ENCODE measurements at regions of chr15 and their contacts with region 1.

Region 1: DNA sequence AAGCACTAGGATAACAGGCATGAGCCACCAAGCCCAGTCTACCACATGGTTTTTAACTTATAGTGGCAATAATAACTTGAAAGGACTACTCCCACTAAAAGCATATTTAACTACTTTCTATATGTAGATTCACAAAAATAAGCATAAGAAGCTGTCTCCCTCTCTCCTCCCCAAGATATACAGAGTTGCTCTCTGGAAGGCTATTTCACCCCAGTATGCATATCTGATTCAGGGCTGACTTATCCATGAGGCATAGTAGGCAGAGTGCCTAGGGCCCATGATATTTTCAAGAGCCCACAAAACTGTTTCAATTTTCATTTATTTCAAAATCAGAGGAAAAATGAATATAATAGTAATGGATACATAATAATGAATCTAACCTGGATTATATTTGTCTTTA is 20.5 kb downstream of the ATP8B4 start:
- DNase-seq: no peak
- ATAC-seq: no peak
- H3K4me3 ChIP-seq: no peak overlapping the region
- H3K27ac ChIP-seq: no peak overlapping the region
- H3K4me1 ChIP-seq: peaks cover 0 to 12% (median 0%) of the 10 kb centered on the region in 12 donors
- H3K27me3 ChIP-seq: no peaks in the 10 kb centered on the region
- CTCF ChIP-seq: no peak
- POLR2A ChIP-seq: no peak

Region 2: DNA sequence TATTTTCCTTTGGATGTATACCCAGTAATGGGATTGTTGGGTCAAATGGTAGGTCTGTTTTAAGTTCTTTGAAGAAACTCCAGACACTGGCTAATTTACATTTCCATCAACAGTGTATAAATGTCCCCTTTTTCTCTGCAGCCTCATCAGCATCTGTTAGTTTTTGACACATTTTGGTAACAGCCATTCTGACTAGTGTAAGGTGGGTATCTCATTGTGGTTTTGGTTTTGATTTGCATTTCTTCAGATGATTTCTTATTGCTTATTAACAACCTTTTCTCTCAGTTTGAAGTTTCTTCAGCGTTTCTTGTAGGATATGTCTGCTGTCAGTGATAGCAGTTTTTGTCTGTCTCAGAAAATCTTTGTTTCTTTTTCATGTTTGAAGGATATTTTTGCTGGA is 913.1 kb before region 1 on chr15:
- intact Hi-C with region 1: no loop called
- DNase-seq: no peak
- ATAC-seq: no peak
- H3K4me3 ChIP-seq: no peak overlapping the region
- H3K27ac ChIP-seq: no peak overlapping the region
- H3K4me1 ChIP-seq: peaks cover 0 to 9% (median 0%) of the 10 kb centered on the region in 12 donors
- H3K27me3 ChIP-seq: no peaks in the 10 kb centered on the region
- CTCF ChIP-seq: no peak
- POLR2A ChIP-seq: no peak

Region 3: GRCh38 chr15:50066192-50066591 is 32.4 kb before region 1 on chr15:
- intact Hi-C with region 1: loop called in 1 of 10 experiments (anchors 2 kb)
- DNase-seq: no peak
- ATAC-seq: no peak
- H3K4me3 ChIP-seq: no peak overlapping the region
- H3K27ac ChIP-seq: no peak overlapping the region
- H3K4me1 ChIP-seq: peaks cover 0 to 31% (median 0%) of the 10 kb centered on the region in 12 donors
- H3K27me3 ChIP-seq: no peaks in the 10 kb centered on the region
- CTCF ChIP-seq: no peak
- POLR2A ChIP-seq: no peak

Region 4: GRCh38 chr15:50280271-50280670 is 181.7 kb after region 1 on chr15:
- intact Hi-C with region 1: no loop called
- DNase-seq: no peak
- ATAC-seq: no peak
- H3K4me3 ChIP-seq: no peak overlapping the region
- H3K27ac ChIP-seq: no peak overlapping the region
- H3K4me1 ChIP-seq: peaks cover 0 to 9% (median 0%) of the 10 kb centered on the region in 12 donors
- H3K27me3 ChIP-seq: no peaks in the 10 kb centered on the region
- CTCF ChIP-seq: no peak
- POLR2A ChIP-seq: no peak

Measured in heart left ventricle (tissue), 16 donors.